CD8-positive, alpha-beta T cell (primary cell): ENCODE measurements at regions of chr12 and their contacts with region 1.

Region 1: DNA sequence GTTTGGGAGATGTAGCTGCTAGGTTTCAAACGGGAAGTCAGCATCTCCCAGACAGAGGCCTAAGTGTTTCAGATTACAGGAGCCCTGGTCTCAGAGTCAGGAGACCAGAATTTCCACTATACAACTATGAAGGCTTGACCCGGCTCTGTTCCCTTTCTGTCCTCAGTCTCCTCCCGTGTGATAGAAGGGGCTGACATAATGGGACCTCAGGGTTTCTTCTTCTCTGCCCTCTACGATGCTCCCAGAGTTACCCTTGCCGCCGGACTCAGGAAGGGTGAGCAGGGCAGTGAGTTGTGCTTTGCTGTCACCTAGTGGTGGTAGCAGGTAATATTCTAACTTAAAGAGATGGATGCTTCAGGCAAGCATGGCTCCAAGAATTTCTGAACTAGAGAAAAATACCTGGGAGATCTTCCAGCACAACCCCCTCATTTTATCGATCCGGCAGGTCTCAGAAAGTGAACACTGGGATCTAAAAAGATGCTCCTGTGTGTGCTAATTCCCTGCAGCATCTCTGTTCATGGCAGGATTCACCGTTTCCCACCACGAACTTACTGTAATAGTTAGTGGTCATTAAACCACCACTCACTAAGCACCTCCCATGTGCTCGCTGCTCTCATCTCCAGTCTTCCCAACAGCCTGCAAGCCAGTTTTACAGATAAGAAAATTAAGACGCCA is 84.4 kb downstream of the VWF start:
- DNase-seq: peak in 8 of 9 experiments; percentile 21 to 74 (median 44)
- ATAC-seq: peak; percentile 72
- H3K4me3 ChIP-seq: no peak overlapping the region
- H3K4me3 Mint-ChIP-seq: no peak overlapping the region
- H3K27ac ChIP-seq: no peak overlapping the region
- H3K27ac Mint-ChIP-seq: no peak overlapping the region
- H3K4me1 ChIP-seq: peaks cover 4% of the 10 kb centered on the region
- H3K4me1 Mint-ChIP-seq: peaks cover 2% of the 10 kb centered on the region
- H3K27me3 ChIP-seq: no peaks in the 10 kb centered on the region
- H3K27me3 Mint-ChIP-seq: no peaks in the 10 kb centered on the region
- CTCF ChIP-seq: peak; percentile 82

Region 2: DNA sequence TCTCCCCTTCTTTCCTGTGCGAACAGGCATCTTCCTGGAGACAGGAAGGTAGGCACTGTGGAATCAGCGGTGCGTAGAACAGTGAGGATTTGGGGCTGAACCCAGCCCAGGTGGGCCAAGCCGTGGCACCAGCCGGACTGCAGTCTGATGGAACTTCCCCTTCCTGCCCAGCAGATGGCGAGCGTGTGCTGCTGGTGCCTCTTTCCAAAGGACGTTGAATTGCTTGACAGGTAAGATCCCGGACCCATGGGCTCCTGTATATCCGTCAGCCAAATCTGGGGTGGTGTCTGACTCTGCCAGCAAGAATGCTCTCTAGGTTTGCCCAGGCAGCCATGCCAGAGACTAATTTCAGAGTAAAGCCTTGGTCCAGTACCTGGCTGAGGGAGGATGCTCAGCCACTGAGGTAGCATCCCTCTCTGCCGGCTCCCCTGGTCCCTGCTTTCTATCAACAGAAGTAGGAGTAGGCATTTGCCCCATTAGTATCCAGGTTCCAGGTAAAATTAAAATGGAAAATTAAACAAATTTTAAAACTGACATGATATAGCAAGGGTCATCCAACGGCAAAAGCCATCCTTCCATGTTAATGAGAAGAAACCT is 1017.5 kb before region 1 on chr12:
- CTCF ChIA-PET with region 1: no interaction called
- POLR2A ChIA-PET with region 1: no interaction called
- intact Hi-C with region 1: loop called in 1 of 2 experiments (anchors 2 kb)
- DNase-seq: peak in 6 of 9 experiments; percentile 7 to 58 (median 32)
- ATAC-seq: peak; percentile 44
- H3K4me3 ChIP-seq: no peak overlapping the region
- H3K4me3 Mint-ChIP-seq: no peak overlapping the region
- H3K27ac ChIP-seq: no peak overlapping the region
- H3K27ac Mint-ChIP-seq: no peak overlapping the region
- H3K4me1 ChIP-seq: no peaks in the 10 kb centered on the region
- H3K4me1 Mint-ChIP-seq: no peaks in the 10 kb centered on the region
- H3K27me3 ChIP-seq: no peaks in the 10 kb centered on the region
- H3K27me3 Mint-ChIP-seq: peaks cover 26% of the 10 kb centered on the region
- CTCF ChIP-seq: peak; percentile 77

Region 3: GRCh38 chr12:5745265-5745888 is 294.7 kb before region 1 on chr12:
- CTCF ChIA-PET with region 1: no interaction called
- POLR2A ChIA-PET with region 1: no interaction called
- intact Hi-C with region 1: loop called in 1 of 2 experiments (anchors 10 kb)
- DNase-seq: peak; percentile 16 to 64 (median 46)
- ATAC-seq: peak; percentile 56
- H3K4me3 ChIP-seq: no peak overlapping the region
- H3K4me3 Mint-ChIP-seq: no peak overlapping the region
- H3K27ac ChIP-seq: no peak overlapping the region
- H3K27ac Mint-ChIP-seq: no peak overlapping the region
- H3K4me1 ChIP-seq: peaks cover 18% of the 10 kb centered on the region
- H3K4me1 Mint-ChIP-seq: peaks cover 34% of the 10 kb centered on the region
- H3K27me3 ChIP-seq: no peaks in the 10 kb centered on the region
- H3K27me3 Mint-ChIP-seq: no peaks in the 10 kb centered on the region
- CTCF ChIP-seq: peak; percentile 50

Region 4: DNA sequence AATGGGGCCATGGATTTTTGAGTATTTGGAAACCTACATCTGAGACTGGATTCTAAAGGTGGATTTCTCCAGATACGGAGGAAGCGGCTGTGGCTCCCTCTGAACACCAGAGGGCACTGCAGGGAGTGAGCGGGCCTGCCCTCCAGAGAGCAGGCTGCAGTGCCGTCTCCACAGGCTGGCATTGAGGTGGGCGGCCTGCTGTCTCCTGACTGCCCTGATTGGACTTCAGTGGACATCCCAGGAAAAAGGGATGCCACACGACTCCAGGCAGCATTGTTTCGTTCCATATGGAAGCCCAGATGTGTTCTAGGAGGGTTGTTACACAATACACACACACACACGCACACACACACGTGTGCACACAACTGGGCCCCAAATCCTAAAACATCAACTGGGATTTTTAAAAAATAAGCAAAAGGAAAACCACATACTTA is 74.1 kb before region 1 on chr12:
- CTCF ChIA-PET with region 1: interaction called, 5 read pairs
- POLR2A ChIA-PET with region 1: no interaction called
- intact Hi-C with region 1: loop called (anchors 1 kb)
- DNase-seq: peak; percentile 31 to 63 (median 39)
- ATAC-seq: peak; percentile 73
- H3K4me3 ChIP-seq: no peak overlapping the region
- H3K4me3 Mint-ChIP-seq: no peak overlapping the region
- H3K27ac ChIP-seq: no peak overlapping the region
- H3K27ac Mint-ChIP-seq: no peak overlapping the region
- H3K4me1 ChIP-seq: no peaks in the 10 kb centered on the region
- H3K4me1 Mint-ChIP-seq: no peaks in the 10 kb centered on the region
- H3K27me3 ChIP-seq: no peaks in the 10 kb centered on the region
- H3K27me3 Mint-ChIP-seq: peaks cover 16% of the 10 kb centered on the region
- CTCF ChIP-seq: peak; percentile 72

Region 5: GRCh38 chr12:6056406-6057240 is 16.6 kb after region 1 on chr12:
- CTCF ChIA-PET with region 1: interaction called, 14 read pairs
- POLR2A ChIA-PET with region 1: no interaction called
- intact Hi-C with region 1: no loop called
- DNase-seq: peak in 8 of 9 experiments; percentile 20 to 78 (median 58)
- ATAC-seq: peak; percentile 94
- H3K4me3 ChIP-seq: peak overlapping the region; percentile 35 to 54
- H3K4me3 Mint-ChIP-seq: peak overlapping the region; percentile 79
- H3K27ac ChIP-seq: peak overlapping the region in 1 of 2 experiments; percentile 31
- H3K27ac Mint-ChIP-seq: peak overlapping the region; percentile 91
- H3K4me1 ChIP-seq: peaks cover 8% of the 10 kb centered on the region
- H3K4me1 Mint-ChIP-seq: peaks cover 12% of the 10 kb centered on the region
- H3K27me3 ChIP-seq: no peaks in the 10 kb centered on the region
- H3K27me3 Mint-ChIP-seq: no peaks in the 10 kb centered on the region
- CTCF ChIP-seq: peak; percentile 33